Right ventricle myocardium superior (tissue), 1 donor: ENCODE measurements at regions of chr10 and their contacts with region 1.

Region 1: DNA sequence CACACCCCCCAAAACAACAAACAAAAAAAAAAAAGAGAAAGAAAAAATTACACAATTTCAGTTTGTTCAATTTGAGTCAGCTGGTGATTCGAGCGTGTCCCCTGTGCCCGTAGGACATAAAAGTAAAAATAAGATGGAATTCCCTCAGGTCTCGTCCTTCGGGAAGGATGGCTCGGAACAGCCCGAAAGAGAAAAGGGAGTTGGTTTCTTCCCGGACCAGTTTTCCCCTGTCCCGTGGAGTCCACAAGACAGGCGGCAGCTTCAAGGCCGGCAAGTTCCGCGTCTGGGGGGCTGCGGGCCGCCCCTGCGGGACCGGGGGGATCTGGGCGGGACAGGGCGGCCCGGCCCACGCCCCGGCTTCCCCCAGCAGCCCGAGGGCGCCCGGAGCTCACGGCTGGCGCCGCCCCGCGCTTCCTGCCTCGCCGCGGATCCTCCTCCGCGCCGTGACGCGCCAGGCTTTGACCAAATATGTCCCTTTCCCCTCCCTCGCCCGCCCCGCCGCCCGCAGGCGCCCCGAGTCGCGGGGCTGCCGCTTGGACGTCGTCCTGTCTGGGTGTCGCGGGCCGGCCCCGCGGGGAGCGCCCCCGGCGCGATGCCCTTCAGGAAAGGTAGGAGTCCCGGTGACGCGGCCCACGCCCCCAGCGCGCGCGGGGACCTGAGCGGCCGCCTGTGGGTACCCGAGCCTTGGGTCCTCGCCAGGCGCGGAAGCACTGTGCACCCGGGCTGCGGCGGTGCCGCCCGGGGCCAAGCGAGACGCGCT is 55.8 kb downstream of the RBM17 start:
- DNase-seq: peak; percentile 97
- ATAC-seq: peak; percentile 97

Region 2: DNA sequence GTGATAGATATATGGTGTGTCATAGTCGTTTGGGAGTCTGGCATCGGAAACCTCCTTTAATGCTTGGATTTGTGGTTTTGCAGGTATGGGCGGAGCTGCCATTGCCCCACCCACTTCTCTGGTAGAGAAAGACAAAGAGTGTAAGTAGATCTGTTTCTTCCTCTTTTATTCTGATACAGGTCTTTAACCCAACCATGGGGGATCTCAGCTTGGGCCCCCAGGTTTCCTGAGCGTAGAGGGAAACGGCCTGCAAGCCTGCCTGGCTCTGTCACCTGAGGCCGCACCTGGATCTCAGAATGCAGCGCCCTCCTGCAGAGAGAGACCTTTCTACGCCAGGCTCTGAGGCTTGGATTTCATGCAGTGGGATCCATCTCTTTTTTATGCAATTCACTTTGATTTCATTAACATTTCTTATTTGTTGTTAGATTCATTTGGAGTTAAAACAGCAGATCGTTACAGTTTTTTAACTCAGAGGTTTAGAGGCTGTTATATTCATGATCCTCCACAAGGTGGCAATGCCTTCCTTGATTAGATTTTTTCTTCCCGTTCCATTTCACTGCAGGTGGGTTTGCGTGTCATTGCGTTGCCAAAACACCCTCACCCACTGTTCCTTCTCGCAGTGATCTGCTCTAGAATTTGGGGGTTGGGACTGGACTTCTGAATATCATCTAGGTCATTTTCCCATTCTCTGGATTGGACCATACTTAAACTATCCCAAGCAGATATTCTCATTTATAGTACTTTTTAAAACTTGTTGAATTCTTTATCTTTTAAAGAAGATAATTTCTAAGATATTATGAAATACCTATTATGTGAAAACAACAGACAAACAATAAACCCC is 35.8 kb before region 1 on chr10:
- intact Hi-C with region 1: loop called (anchors 5 kb)
- DNase-seq: no peak
- ATAC-seq: peak; percentile 52